ENCODE measurements at regions of chr17 and their contacts with region 1.

Region 1: DNA sequence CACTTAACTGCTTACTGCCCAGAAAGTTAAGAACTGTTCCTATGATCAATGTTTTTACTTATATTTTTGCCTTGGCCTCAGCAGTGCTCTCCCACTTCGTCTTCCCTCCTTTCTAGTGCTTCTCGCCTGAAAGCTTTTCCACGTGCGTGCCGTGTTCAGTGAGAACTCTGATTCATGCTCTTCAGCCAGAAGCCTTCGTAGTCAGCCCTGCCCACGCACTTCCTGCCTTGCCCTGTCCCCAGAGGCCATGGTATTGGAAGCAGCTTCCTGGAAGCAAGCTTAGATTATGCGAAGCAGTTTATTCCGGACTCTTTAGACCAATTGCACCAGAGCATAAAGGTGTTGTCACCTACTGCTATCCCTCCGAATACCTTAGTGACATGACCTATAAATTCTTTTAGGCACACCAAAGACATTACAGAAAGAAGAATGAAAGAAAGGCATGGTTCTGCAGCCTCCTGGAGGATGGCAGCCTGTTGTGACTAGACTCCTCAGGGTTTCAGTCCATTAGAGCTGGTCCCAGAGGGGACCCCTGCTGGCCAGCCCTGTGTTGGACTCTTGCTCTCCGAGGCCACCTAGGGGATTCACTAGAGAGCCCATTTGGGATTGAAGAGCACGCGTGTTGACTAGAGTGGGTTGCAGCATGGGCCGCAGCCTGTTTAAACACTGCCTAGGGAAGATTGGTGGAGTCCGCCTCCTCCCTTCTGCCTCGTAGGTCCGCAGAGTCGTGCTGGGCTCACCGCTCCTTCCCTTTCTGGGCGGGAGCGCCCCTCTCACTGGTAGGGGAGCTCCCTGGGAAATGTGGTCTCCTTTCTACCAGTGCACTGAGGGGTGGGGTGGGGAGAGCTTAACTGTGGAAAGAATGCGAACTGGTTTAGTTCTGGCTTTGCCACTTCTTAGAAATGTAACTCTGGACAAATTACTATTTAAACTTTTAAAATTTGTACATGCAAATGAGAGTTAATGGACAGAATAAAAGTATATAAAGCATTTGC is 105.3 kb downstream of the RPTOR start:
- DNase-seq: peak in 8 of 9 donors; percentile 51 to 76 (median 58)
- ATAC-seq: peak; percentile 79
- H3K4me3 ChIP-seq: peak overlapping the region; percentile 15
- H3K4me3 Mint-ChIP-seq: peak overlapping the region; percentile 64 to 97 (median 78)
- H3K27ac ChIP-seq: peak overlapping the region; percentile 48
- H3K27ac Mint-ChIP-seq: peak overlapping the region; percentile 88 to 99 (median 90)
- H3K4me1 ChIP-seq: peaks cover 20 to 55% of the 10 kb centered on the region in 2 donors
- H3K4me1 Mint-ChIP-seq: peaks cover 45 to 86% (median 80%) of the 10 kb centered on the region in 7 donors
- H3K27me3 ChIP-seq: no peaks in the 10 kb centered on the region
- H3K27me3 Mint-ChIP-seq: no peaks in the 10 kb centered on the region

Region 2: GRCh38 chr17:80704381-80704819 is 54.4 kb after region 1 on chr17:
- CTCF ChIA-PET with region 1: no interaction called
- POLR2A ChIA-PET with region 1: interaction called, 4 read pairs
- intact Hi-C with region 1: loop called in 1 of 2 experiments (anchors 1 kb)
- DNase-seq: no peak
- ATAC-seq: no peak
- H3K4me3 ChIP-seq: no peak overlapping the region
- H3K4me3 Mint-ChIP-seq: peak overlapping the region in 7 of 10 donors; percentile 42 to 76 (median 51)
- H3K27ac ChIP-seq: no peak overlapping the region
- H3K27ac Mint-ChIP-seq: peak overlapping the region in 7 of 9 donors; percentile 34 to 96 (median 88)
- H3K4me1 ChIP-seq: peaks cover 33 to 35% of the 10 kb centered on the region in 2 donors
- H3K4me1 Mint-ChIP-seq: peaks cover 46 to 91% (median 83%) of the 10 kb centered on the region in 7 donors
- H3K27me3 ChIP-seq: no peaks in the 10 kb centered on the region
- H3K27me3 Mint-ChIP-seq: no peaks in the 10 kb centered on the region

Region 3: DNA sequence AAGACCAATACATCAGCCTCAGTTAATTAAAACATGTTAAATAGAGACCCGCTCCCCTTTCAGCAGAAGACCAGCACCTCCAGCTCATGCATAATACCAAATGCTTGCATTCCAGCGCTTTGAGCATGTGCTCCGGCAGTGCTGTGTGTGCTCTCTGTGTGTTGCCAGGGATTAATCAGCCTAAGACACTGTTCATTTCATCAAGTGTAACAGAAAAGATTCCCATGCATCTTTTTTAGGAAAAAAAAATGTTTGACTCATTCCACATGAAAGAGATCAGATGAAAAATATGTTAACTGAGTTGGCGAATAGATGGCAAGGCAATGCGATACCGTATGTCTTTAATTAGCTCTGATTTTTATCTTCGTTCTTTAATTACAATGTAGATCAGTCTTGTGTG is 82.3 kb after region 1 on chr17:
- CTCF ChIA-PET with region 1: no interaction called
- POLR2A ChIA-PET with region 1: interaction called, 4 read pairs
- intact Hi-C with region 1: loop called in 1 of 2 experiments (anchors 5 kb)
- DNase-seq: no peak
- ATAC-seq: no peak
- H3K4me3 ChIP-seq: no peak overlapping the region
- H3K4me3 Mint-ChIP-seq: peak overlapping the region in 2 of 10 donors; percentile 25
- H3K27ac ChIP-seq: no peak overlapping the region
- H3K27ac Mint-ChIP-seq: peak overlapping the region in 6 of 9 donors; percentile 15 to 96 (median 66)
- H3K4me1 ChIP-seq: peaks cover 7 to 15% of the 10 kb centered on the region in 2 donors
- H3K4me1 Mint-ChIP-seq: peaks cover 11 to 88% (median 73%) of the 10 kb centered on the region in 7 donors
- H3K27me3 ChIP-seq: no peaks in the 10 kb centered on the region
- H3K27me3 Mint-ChIP-seq: no peaks in the 10 kb centered on the region